ENCODE measurements at regions of chr10 and their contacts with region 1.

Region 1: DNA sequence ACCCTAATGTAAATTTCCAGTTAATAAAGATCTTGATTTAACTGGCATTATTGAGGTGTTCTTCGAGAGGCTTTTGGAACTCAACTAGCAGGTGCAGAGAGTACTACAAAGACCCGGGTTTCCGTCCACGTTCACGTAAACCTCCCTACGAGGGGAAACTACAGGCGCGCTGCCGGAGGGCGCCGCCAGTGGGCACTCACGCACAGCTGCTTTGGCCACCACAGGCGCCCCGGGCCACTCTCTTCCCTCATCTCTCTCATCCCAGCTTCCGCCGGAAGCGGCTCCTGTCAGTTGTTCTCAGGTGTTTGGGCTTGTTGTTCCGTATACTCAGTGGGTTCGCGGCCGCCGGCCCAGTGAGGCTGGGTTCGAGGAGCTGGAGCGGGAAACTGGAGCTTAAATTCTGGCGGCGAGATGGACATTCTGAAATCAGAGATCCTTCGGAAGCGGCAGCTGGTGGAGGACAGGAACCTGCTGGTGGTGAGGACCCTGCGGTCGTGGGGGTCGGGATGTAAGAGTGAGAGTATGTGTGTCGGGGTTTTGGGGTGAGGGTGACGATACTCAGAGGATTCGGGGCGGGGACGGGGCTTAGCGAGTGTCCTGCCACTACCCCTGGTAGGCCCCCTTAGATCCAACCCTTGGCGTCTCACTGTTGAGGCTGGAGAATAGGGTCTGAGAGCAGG is at the start of gene PRPF18:
- DNase-seq: peak; percentile 87 to 96 (median 93)
- ATAC-seq: peak; percentile 100
- H3K4me3 ChIP-seq: peak within 1 kb of the TSS; percentile 96
- H3K4me3 Mint-ChIP-seq: peak within 1 kb of the TSS; percentile 95 to 100 (median 100)
- H3K27ac ChIP-seq: peak within 1 kb of the TSS; percentile 74
- H3K27ac Mint-ChIP-seq: peak within 1 kb of the TSS; percentile 91 to 100 (median 98)
- H3K4me1 ChIP-seq: peaks cover 8 to 13% of the 10 kb centered on the region in 2 donors
- H3K4me1 Mint-ChIP-seq: peaks cover 15 to 49% (median 40%) of the 10 kb centered on the region in 7 donors
- H3K27me3 ChIP-seq: no peaks in the 10 kb centered on the region
- H3K27me3 Mint-ChIP-seq: peaks cover 9 to 27% (median 16%) of the 10 kb centered on the region in 5 donors
- total RNA-seq, gene PRPF18: 20.2 to 30.0 (median 27.0) TPM

Region 2: DNA sequence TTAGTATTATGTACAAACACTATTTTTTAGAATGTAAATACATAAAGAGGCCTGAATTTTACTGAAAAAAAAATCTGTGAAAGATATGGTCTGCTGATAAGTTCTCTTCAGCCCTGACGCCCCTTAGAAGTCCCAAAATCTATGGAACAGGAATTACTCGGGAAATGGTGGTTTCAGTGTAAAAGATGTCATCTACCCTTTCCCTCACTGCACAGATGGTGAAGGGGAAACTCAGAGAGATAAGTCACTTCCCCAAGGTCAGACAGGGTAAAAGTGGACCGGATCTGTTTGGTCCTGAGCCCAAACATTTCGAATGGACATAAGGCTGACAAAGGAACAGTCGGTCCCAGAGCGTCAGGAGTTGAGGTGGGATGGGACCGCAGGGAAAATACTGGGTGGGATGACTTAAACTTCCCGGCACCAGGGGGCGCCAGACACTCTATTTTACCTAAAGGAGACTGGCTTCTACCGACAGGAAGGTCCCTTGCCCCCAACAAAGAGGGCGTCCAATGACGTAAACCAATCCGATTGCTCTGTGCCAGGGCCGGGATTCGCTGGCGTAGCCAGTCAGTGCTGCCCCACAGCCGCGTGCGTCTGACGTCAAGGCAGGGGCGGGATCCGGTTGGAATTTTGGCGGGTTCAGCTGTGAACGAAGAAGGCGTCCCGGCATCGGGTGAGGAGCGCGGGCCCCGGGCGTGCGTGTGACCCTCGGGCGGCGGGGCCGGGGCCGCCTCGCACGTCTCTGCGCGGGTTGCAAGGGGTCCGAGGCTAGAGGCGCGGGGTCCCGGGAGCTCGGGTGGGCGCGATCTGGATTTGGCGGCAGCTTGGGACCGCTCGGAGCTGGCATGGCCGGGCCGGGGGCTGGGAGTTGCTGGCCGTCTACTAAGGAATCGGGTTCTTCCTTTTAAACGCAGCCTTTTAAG is 425.6 kb before region 1 on chr10 and contains the start of gene MCM10:
- CTCF ChIA-PET with region 1: no interaction called
- POLR2A ChIA-PET with region 1: no interaction called
- intact Hi-C with region 1: loop called in 1 of 2 experiments (anchors 1 kb)
- DNase-seq: peak; percentile 86 to 99 (median 96)
- ATAC-seq: peak; percentile 100
- H3K4me3 ChIP-seq: peak within 1 kb of the TSS; percentile 47
- H3K4me3 Mint-ChIP-seq: peak within 1 kb of the TSS; percentile 64 to 93 (median 88)
- H3K27ac ChIP-seq: no peak within 1 kb of the TSS
- H3K27ac Mint-ChIP-seq: peak within 1 kb of the TSS; percentile 44 to 89 (median 74)
- H3K4me1 ChIP-seq: peaks cover 6 to 10% of the 10 kb centered on the region in 2 donors
- H3K4me1 Mint-ChIP-seq: peaks cover 3 to 38% (median 19%) of the 10 kb centered on the region in 7 donors
- H3K27me3 ChIP-seq: no peaks in the 10 kb centered on the region
- H3K27me3 Mint-ChIP-seq: peaks cover 0 to 2% (median 0%) of the 10 kb centered on the region in 5 donors
- total RNA-seq, gene MCM10: 0.08 to 41.8 (median 0.42) TPM

Region 3: DNA sequence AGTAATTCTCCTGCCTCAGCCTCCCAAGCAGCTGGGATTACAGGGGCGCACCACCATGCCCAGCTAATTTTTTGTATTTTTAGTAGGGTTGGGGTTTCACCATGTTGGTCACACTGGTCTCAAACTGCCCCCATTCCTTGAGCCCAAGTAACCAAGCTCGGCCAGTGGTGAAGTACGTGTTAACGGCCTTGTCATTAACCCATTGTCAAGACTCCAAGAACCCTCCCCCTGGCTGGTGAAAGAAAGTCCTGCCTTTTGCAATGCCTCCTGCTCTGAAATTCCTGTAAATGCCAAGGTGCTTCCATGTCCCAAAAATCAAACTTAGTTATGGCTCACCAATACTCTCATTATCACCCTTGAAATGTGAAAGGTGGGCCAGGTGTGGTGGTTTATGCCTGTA is 219.9 kb before region 1 on chr10:
- CTCF ChIA-PET with region 1: interaction called, 3 read pairs
- POLR2A ChIA-PET with region 1: no interaction called
- intact Hi-C with region 1: loop called (anchors 1 kb)
- DNase-seq: no peak
- ATAC-seq: no peak
- H3K4me3 ChIP-seq: no peak overlapping the region
- H3K4me3 Mint-ChIP-seq: no peak overlapping the region
- H3K27ac ChIP-seq: no peak overlapping the region
- H3K27ac Mint-ChIP-seq: no peak overlapping the region
- H3K4me1 ChIP-seq: no peaks in the 10 kb centered on the region
- H3K4me1 Mint-ChIP-seq: peaks cover 0 to 4% (median 0%) of the 10 kb centered on the region in 7 donors
- H3K27me3 ChIP-seq: no peaks in the 10 kb centered on the region
- H3K27me3 Mint-ChIP-seq: no peaks in the 10 kb centered on the region

Region 4: DNA sequence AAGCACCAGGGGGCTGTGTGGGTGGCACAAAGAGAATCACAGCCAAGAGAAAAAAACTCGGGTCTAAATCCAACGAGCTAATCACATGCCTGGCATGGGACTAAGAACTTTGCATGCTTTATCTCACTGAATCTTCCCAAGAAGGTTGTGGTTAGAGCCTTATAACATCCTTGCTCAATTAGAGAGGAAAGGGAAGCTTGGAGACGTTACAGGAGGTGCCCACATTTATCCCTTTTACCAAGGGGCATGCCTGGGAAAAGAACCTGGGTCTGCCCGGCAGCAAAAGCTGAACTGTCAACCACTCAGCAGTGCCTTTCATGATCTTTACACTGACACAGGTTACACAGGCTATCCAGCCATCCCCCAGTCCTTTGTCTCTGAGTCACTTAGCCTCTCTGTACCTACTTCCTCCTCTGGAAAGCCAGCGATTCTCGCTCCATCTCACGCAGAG is 190.1 kb after region 1 on chr10:
- CTCF ChIA-PET with region 1: no interaction called
- POLR2A ChIA-PET with region 1: no interaction called
- intact Hi-C with region 1: loop called in 1 of 2 experiments (anchors 1 kb)
- DNase-seq: no peak
- ATAC-seq: no peak
- H3K4me3 ChIP-seq: no peak overlapping the region
- H3K4me3 Mint-ChIP-seq: no peak overlapping the region
- H3K27ac ChIP-seq: no peak overlapping the region
- H3K27ac Mint-ChIP-seq: no peak overlapping the region
- H3K4me1 ChIP-seq: peaks cover 0 to 4% of the 10 kb centered on the region in 2 donors
- H3K4me1 Mint-ChIP-seq: peaks cover 0 to 6% (median 0%) of the 10 kb centered on the region in 7 donors
- H3K27me3 ChIP-seq: no peaks in the 10 kb centered on the region
- H3K27me3 Mint-ChIP-seq: peaks cover 8 to 18% (median 11%) of the 10 kb centered on the region in 5 donors

Region 5: GRCh38 chr10:13816195-13816926 is 229.5 kb after region 1 on chr10:
- CTCF ChIA-PET with region 1: no interaction called
- POLR2A ChIA-PET with region 1: no interaction called
- intact Hi-C with region 1: no loop called
- DNase-seq: no peak
- ATAC-seq: no peak
- H3K4me3 ChIP-seq: no peak overlapping the region
- H3K4me3 Mint-ChIP-seq: no peak overlapping the region
- H3K27ac ChIP-seq: no peak overlapping the region
- H3K27ac Mint-ChIP-seq: no peak overlapping the region
- H3K4me1 ChIP-seq: peaks cover 0 to 15% of the 10 kb centered on the region in 2 donors
- H3K4me1 Mint-ChIP-seq: peaks cover 7 to 18% (median 14%) of the 10 kb centered on the region in 7 donors
- H3K27me3 ChIP-seq: no peaks in the 10 kb centered on the region
- H3K27me3 Mint-ChIP-seq: peaks cover 0 to 11% (median 3%) of the 10 kb centered on the region in 5 donors

Region 6: GRCh38 chr10:14340051-14340744 is 753.4 kb after region 1 on chr10:
- CTCF ChIA-PET with region 1: no interaction called
- POLR2A ChIA-PET with region 1: no interaction called
- intact Hi-C with region 1: no loop called
- DNase-seq: no peak
- ATAC-seq: no peak
- H3K4me3 ChIP-seq: no peak overlapping the region
- H3K4me3 Mint-ChIP-seq: no peak overlapping the region
- H3K27ac ChIP-seq: no peak overlapping the region
- H3K27ac Mint-ChIP-seq: no peak overlapping the region
- H3K4me1 ChIP-seq: no peaks in the 10 kb centered on the region
- H3K4me1 Mint-ChIP-seq: peaks cover 0 to 4% (median 0%) of the 10 kb centered on the region in 7 donors
- H3K27me3 ChIP-seq: no peaks in the 10 kb centered on the region
- H3K27me3 Mint-ChIP-seq: peaks cover 3 to 35% (median 21%) of the 10 kb centered on the region in 5 donors

Region 7: DNA sequence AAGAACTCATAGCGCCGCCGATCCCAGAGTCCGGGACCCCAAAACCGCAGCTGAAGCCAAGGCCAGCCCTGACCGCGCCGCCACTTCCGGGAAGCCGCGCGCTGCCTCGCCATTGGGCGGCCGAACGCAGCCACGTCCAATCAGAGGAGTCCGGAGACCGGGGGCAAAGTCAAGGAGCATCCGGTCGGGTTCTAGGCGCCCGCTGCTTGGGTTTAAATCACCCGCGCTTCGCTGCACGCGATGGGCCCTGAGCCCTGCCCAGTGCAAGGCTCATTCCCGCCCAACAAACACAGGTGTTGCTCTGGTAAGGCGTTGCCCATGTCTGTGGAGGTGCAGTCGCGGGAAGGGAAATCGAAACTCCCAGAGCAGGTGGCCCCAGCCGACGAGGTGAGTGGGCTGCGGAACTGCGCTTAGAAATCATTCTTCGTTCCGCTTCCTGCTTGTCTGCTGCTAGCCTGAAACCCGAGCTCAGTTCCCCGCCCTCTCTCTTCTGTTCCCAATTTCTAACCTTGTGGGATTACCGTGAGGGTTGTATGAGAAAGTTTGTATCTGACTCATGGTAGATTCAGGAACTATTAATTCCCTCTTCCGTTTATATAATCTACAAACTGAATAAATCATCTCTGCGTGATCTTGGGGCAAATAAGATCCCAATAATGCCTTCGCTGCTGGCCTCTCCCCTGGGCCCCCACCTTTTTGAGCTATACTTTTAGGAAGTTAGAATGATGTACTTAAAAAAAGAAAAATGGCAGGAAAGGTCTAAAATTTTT is 1367.4 kb after region 1 on chr10 and contains the start of gene DCLRE1C:
- CTCF ChIA-PET with region 1: interaction called, 3 read pairs
- POLR2A ChIA-PET with region 1: no interaction called
- intact Hi-C with region 1: loop called (anchors 1 to 10 kb)
- DNase-seq: peak; percentile 70 to 89 (median 87)
- ATAC-seq: peak; percentile 90
- H3K4me3 ChIP-seq: peak within 1 kb of the TSS; percentile 97
- H3K4me3 Mint-ChIP-seq: peak within 1 kb of the TSS; percentile 89 to 96 (median 92)
- H3K27ac ChIP-seq: peak within 1 kb of the TSS; percentile 78
- H3K27ac Mint-ChIP-seq: peak within 1 kb of the TSS; percentile 91 to 97 (median 96)
- H3K4me1 ChIP-seq: peaks cover 29 to 32% of the 10 kb centered on the region in 2 donors
- H3K4me1 Mint-ChIP-seq: peaks cover 29 to 69% (median 65%) of the 10 kb centered on the region in 7 donors
- H3K27me3 ChIP-seq: no peaks in the 10 kb centered on the region
- H3K27me3 Mint-ChIP-seq: no peaks in the 10 kb centered on the region
- total RNA-seq, gene DCLRE1C: 16.4 to 38.7 (median 24.2) TPM

Measured in naive thymus-derived CD4-positive, alpha-beta T cell (primary cell).